ENCODE measurements at regions of chr3 and their contacts with region 1.

Region 1: DNA sequence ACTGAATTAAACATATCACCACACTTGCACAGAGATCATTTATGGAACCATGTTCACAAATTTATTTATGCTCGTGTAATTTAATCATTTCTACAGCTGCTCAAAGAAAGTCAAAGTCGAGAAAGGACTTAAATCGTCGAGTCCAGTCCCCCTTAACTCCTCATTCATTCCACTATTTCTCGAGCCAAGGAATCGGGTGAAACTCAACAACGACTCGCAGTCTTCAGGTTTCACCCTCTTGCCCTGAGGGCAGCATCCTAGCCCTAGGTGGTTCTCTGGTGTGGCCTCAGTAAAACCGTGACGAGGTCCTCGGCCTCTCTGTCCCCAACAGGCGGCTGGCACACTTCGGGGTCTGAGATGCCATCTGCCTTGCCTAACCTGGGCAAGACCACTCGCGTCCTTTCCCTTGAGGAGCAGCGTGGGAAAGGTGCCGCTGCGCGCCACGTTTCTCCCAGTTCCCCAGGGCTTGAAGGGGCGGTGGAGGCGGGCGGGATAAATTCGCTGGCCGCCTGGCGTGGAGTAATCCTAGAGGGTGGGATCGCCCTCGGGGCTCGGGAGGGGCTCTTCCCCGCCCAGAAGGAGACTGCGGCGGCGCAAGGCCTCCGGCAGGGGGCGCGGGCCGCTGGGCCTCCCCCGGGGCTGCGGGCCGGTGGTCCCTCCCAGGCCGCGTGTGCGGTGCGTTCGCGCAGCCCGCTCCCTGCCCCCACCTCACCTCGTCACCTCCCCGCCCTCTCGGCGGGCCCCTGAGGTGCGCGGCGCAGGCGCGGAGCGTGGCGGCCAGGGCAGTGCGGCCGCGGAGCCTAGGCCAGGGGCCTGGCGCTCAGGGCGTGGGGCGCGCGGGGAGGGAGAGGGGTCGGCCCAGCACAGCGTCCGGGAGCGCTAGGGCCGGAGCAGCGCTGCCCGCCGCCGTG is at the start of gene ZNF639:
- DNase-seq: peak; percentile 89

Region 2: GRCh38 chr3:178436773-178437172 is 885.8 kb before region 1 on chr3:
- in situ Hi-C with region 1: loop called (anchors 25 kb)
- DNase-seq: peak; percentile 57

Region 3: GRCh38 chr3:179015551-179016020 is 307.0 kb before region 1 on chr3:
- in situ Hi-C with region 1: loop called (anchors 25 kb)
- DNase-seq: peak; percentile 89

Region 4: DNA sequence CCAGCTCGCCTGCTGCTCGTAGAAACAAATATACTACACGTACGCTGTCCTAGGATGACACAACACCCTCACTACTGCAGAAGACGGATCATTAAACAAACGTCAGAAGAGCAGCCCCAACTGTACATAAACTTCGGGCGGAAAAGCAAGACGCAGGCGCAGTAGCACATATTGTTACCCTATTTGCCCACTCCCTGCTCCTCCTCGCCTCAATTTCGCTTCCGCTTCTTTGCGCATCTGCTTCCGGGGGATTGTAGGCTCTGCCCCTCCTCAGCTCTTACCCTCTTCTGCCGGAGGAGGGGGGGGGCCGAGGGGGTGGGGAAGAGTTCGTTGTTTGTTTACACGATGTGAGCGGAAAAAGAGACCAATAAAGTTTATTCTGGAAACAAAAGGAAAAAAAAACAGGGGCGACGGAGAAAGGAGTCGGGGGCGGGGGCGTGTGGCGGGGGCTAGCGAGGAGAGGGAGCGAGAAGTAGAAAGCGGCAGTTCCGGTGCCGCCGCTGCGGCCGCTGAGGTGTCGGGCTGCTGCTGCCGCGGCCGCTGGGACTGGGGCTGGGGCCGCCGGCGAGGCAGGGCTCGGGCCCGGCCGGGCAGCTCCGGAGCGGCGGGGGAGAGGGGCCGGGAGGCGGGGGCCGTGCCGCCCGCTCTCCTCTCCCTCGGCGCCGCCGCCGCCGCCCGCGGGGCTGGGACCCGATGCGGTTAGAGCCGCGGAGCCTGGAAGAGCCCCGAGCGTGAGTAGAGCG is 174.5 kb before region 1 on chr3 and contains the start of gene PIK3CA:
- in situ Hi-C with region 1: loop called (anchors 25 kb)
- DNase-seq: peak; percentile 98

Region 5: GRCh38 chr3:179726075-179726699 is 403.6 kb after region 1 on chr3:
- in situ Hi-C with region 1: no loop called
- DNase-seq: no peak

Measured in KBM-7 (cell line).